GM23248 (cell line): ENCODE measurements at regions of chr1 and their contacts with region 1.

Region 1: GRCh38 chr1:8314346-8315280 is 3.3 kb upstream of the SLC45A1 start:
- DNase-seq: peak; percentile 87
- H3K4me3 ChIP-seq: no peak overlapping the region
- H3K27ac ChIP-seq: no peak overlapping the region
- H3K4me1 ChIP-seq: no peaks in the 10 kb centered on the region
- H3K27me3 ChIP-seq: no peaks in the 10 kb centered on the region

Region 2: DNA sequence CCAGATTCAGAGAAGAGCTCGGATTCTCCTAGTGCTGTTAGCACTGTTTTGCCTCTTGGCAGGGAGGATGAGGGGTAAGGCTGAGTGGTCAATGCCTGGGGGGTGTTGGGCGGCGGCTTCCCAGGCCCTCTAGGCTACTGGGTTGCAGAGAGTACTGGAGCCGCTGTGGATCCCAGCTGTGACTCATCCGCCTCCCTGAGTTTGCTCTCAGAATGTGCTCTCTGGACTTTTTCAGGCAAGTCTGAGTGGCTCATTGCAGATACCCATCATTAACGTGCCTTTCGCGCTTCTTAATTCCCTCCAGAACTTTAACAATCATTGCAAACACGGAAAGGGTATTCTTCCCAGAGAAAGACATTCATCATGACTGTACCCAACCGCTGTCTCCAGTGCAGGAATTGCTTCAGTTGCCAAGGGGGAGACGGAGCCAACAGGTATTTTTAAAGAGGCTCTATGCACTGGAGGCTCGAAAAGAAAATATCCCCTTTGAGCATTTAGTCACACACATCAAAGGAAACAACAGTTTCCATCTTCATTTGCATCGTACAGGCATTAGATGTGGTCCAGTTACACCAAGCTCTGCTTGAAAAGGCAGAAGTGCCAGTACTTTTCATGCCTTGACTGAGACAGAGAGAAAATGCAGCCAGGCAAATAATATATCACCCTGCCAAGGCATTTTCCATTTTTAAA is 1543.7 kb before region 1 on chr1:
- in situ Hi-C with region 1: no loop called
- DNase-seq: peak; percentile 84
- H3K4me3 ChIP-seq: peak overlapping the region; percentile 51
- H3K27ac ChIP-seq: no peak overlapping the region
- H3K4me1 ChIP-seq: peaks cover 23% of the 10 kb centered on the region
- H3K27me3 ChIP-seq: no peaks in the 10 kb centered on the region

Region 3: GRCh38 chr1:7989762-7990428 is 324.7 kb before region 1 on chr1:
- in situ Hi-C with region 1: loop called (anchors 10 kb)
- DNase-seq: no peak
- H3K4me3 ChIP-seq: no peak overlapping the region
- H3K27ac ChIP-seq: no peak overlapping the region
- H3K4me1 ChIP-seq: peaks cover 15% of the 10 kb centered on the region
- H3K27me3 ChIP-seq: no peaks in the 10 kb centered on the region

Region 4: DNA sequence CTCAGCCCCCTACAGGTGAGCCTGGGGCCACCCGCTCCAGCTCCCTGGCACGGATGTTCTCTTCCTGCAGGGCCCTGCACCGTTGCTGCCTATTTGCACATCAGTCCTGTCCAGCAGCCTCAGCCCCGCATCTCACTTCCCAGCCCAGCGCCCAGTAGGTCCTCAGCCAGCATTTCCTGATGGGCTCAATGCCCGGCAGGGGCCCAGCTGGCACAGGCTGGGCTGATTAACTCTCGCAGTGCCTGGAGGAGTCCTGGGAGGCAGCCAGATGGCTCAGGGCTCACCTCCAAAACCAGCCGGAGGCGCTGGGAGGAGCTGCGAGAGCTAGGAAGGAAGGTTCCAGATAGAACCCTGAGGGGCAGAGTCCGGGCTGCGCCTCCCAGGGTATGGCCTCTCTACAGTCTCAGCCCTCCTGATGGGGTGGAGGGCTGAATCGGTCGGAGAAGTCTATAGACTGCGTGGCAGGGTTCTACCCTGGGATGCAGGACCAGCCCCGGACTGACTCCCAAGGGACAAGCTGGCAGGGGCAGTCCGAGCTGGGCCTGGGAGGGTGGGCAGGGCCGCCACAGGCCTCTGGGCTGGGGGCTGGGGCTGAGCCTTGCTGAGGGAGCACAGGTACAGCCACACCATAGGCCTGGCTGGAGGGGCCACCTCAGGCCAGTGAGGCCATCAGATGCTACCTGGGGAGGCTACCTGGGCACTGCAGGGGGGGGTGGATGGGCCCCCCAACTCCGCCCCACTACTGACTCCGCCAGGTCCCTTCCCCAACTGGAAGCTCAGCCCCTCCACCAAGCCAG is 1528.4 kb after region 1 on chr1:
- in situ Hi-C with region 1: no loop called
- DNase-seq: no peak
- H3K4me3 ChIP-seq: no peak overlapping the region
- H3K27ac ChIP-seq: no peak overlapping the region
- H3K4me1 ChIP-seq: no peaks in the 10 kb centered on the region
- H3K27me3 ChIP-seq: no peaks in the 10 kb centered on the region